ENCODE measurements at regions of chr3 and their contacts with region 1.

Region 1: GRCh38 chr3:146218880-146219866 is 31.7 kb downstream of the PLSCR4 start:
- DNase-seq: peak; percentile 25
- H3K4me3 Mint-ChIP-seq: no peak overlapping the region
- H3K27ac Mint-ChIP-seq: no peak overlapping the region
- H3K4me1 Mint-ChIP-seq: no peaks in the 10 kb centered on the region
- H3K27me3 Mint-ChIP-seq: peaks cover 5% of the 10 kb centered on the region

Region 2: GRCh38 chr3:145963111-145963510 is 256.1 kb before region 1 on chr3:
- CTCF ChIA-PET with region 1: no interaction called
- POLR2A ChIA-PET with region 1: no interaction called
- intact Hi-C with region 1: no loop called
- DNase-seq: no peak
- H3K4me3 Mint-ChIP-seq: no peak overlapping the region
- H3K27ac Mint-ChIP-seq: no peak overlapping the region
- H3K4me1 Mint-ChIP-seq: no peaks in the 10 kb centered on the region
- H3K27me3 Mint-ChIP-seq: no peaks in the 10 kb centered on the region

Region 3: DNA sequence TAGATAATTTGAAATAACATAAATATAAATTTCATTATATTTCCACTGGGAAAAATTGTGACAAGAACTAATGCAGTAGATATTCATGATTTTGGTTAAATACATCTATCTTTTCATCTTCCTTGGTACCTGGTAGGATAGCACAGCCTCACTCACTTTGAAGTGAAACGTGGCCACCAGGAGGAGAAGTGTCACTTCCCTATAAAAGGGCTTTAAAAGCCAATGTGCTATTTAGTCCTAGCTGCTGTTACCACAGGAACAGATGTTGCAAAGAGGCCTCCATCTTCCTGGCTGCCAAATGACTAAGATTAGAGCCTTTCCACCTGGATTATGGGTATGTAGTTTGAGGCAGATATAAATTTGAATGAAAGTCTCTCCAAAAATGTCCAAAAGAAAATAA is 198.2 kb before region 1 on chr3:
- CTCF ChIA-PET with region 1: no interaction called
- POLR2A ChIA-PET with region 1: no interaction called
- intact Hi-C with region 1: no loop called
- DNase-seq: no peak
- H3K4me3 Mint-ChIP-seq: no peak overlapping the region
- H3K27ac Mint-ChIP-seq: no peak overlapping the region
- H3K4me1 Mint-ChIP-seq: no peaks in the 10 kb centered on the region
- H3K27me3 Mint-ChIP-seq: no peaks in the 10 kb centered on the region

Region 4: DNA sequence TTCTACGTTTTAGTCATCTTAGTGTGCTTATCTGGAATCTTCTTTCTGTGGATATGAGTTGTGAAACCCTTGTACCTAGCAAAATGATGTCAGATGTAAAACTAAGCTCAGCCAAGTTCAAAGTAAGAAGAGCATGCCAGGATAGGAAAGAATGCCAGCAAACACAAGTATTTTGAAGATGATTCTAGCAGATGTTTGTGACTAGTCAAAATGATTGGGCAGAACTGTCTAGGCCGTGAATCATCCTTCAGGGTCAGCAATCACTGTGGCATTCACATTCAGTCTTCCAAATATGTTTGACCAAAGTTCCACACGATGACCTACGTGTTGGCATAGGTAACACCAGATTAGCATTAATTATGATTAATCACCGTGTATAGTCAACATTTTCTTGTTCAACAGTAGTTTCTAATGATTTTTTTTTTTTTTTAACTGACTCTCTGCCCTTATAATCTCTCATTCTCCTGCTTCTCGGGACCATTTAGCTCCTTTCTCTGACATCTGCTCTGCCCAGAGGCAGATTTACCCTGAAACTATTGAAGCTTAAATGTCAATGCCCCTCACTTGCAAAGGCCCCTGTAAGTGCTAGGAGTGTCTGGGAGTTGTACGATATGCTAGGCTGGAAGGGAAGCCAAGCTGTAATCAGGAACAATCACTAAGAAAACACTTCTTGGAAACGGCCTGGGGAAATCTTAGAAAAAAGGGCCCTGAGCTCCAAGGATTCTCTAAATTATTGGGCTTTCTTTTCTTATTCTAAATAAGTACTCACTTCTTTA is 52.5 kb before region 1 on chr3:
- CTCF ChIA-PET with region 1: no interaction called
- POLR2A ChIA-PET with region 1: no interaction called
- intact Hi-C with region 1: no loop called
- DNase-seq: no peak
- H3K4me3 Mint-ChIP-seq: no peak overlapping the region
- H3K27ac Mint-ChIP-seq: no peak overlapping the region
- H3K4me1 Mint-ChIP-seq: peaks cover under 1% of the 10 kb centered on the region
- H3K27me3 Mint-ChIP-seq: peaks cover 19% of the 10 kb centered on the region

Region 5: GRCh38 chr3:146203776-146204175 is 15.4 kb before region 1 on chr3:
- CTCF ChIA-PET with region 1: no interaction called
- POLR2A ChIA-PET with region 1: no interaction called
- intact Hi-C with region 1: no loop called
- DNase-seq: no peak
- H3K4me3 Mint-ChIP-seq: no peak overlapping the region
- H3K27ac Mint-ChIP-seq: no peak overlapping the region
- H3K4me1 Mint-ChIP-seq: no peaks in the 10 kb centered on the region
- H3K27me3 Mint-ChIP-seq: peaks cover 2% of the 10 kb centered on the region

Region 6: GRCh38 chr3:146326670-146327543 is 107.7 kb after region 1 on chr3:
- CTCF ChIA-PET with region 1: no interaction called
- POLR2A ChIA-PET with region 1: no interaction called
- intact Hi-C with region 1: loop called (anchors 5 kb)
- DNase-seq: no peak
- H3K4me3 Mint-ChIP-seq: no peak overlapping the region
- H3K27ac Mint-ChIP-seq: no peak overlapping the region
- H3K4me1 Mint-ChIP-seq: no peaks in the 10 kb centered on the region
- H3K27me3 Mint-ChIP-seq: no peaks in the 10 kb centered on the region

Region 7: GRCh38 chr3:146577662-146578061 is 358.5 kb after region 1 on chr3:
- CTCF ChIA-PET with region 1: interaction called, 11 read pairs
- POLR2A ChIA-PET with region 1: no interaction called
- intact Hi-C with region 1: loop called (anchors 1 kb)
- DNase-seq: peak; percentile 20
- H3K4me3 Mint-ChIP-seq: no peak overlapping the region
- H3K27ac Mint-ChIP-seq: no peak overlapping the region
- H3K4me1 Mint-ChIP-seq: no peaks in the 10 kb centered on the region
- H3K27me3 Mint-ChIP-seq: no peaks in the 10 kb centered on the region

Region 8: DNA sequence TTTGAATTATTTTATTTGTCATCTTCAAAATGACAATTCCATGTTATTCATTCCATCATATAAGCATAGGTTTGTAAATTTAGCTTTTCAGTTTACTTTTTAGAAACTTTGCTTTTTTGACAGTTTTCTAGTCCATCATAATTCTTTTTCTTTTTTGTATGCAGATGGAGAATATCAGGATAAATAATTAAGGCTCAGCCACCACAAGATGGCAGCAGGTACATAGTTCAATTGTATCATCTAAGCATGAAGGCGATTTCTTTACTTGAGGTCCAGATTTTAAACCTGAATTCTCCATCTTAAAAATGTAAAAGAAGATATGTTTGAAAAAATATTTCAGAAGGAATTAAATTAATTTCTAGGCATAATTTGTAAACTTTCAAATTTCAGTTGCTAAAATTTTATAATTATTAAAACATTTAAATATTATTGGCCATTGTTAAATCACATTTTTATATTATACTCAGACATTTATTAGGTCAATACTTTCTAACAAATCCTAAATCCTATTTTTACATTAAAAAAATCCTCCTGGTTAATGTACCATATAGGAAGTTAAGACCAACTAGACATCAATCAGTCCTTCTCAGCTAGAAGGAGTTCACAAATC is 370.8 kb after region 1 on chr3:
- CTCF ChIA-PET with region 1: no interaction called
- POLR2A ChIA-PET with region 1: no interaction called
- intact Hi-C with region 1: loop called (anchors 5 kb)
- DNase-seq: no peak
- H3K4me3 Mint-ChIP-seq: no peak overlapping the region
- H3K27ac Mint-ChIP-seq: no peak overlapping the region
- H3K4me1 Mint-ChIP-seq: no peaks in the 10 kb centered on the region
- H3K27me3 Mint-ChIP-seq: peaks cover 2% of the 10 kb centered on the region

Measured in activated CD4-positive, alpha-beta memory T cell treated with anti-CD3 and anti-CD28 coated beads for 36 hours (primary cell).